Caco-2 (cell line): ENCODE measurements at regions of chr21 and their contacts with region 1.

Region 1: GRCh38 chr21:33924079-33924765 is 8.6 kb upstream of the ATP5PO start:
- DNase-seq: peak; percentile 87 to 89
- H3K4me3 ChIP-seq: no peak overlapping the region
- H3K4me3 Mint-ChIP-seq: no peak overlapping the region
- H3K27ac Mint-ChIP-seq: peak overlapping the region; percentile 2
- H3K4me1 ChIP-seq: peaks cover 22% of the 10 kb centered on the region
- H3K4me1 Mint-ChIP-seq: peaks cover 8% of the 10 kb centered on the region
- H3K27me3 ChIP-seq: no peaks in the 10 kb centered on the region
- H3K27me3 Mint-ChIP-seq: no peaks in the 10 kb centered on the region
- CTCF ChIP-seq: peak; percentile 79 to 81

Region 2: DNA sequence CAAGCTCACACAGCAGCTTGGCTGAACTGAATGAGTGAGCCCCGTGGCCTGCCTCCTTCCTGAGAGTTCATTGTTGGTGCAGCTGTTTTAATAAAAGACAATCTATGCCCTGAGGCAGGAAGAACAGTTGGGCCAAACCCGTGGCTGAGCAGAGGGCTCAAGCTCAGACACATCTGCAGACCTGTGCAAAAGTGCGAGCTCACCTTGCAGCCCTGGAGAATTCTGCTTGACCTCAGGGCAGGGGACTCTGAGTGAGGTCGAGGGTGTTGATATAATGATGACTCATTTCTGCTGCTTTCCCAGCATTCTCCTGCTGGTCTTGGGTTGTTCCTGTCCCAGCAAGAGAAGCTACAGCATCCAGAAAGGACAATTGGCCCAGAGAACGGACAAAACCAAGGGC is 69.6 kb before region 1 on chr21:
- CTCF ChIA-PET with region 1: no interaction called
- POLR2A ChIA-PET with region 1: no interaction called
- intact Hi-C with region 1: no loop called
- DNase-seq: no peak
- H3K4me3 ChIP-seq: no peak overlapping the region
- H3K4me3 Mint-ChIP-seq: no peak overlapping the region
- H3K27ac Mint-ChIP-seq: no peak overlapping the region
- H3K4me1 ChIP-seq: 0 out of 2 replicates have a peak, but pooled peaks cover 9% of the 10 kb centered on the region
- H3K4me1 Mint-ChIP-seq: no peaks in the 10 kb centered on the region
- H3K27me3 ChIP-seq: no peaks in the 10 kb centered on the region
- H3K27me3 Mint-ChIP-seq: no peaks in the 10 kb centered on the region
- CTCF ChIP-seq: no peak

Region 3: DNA sequence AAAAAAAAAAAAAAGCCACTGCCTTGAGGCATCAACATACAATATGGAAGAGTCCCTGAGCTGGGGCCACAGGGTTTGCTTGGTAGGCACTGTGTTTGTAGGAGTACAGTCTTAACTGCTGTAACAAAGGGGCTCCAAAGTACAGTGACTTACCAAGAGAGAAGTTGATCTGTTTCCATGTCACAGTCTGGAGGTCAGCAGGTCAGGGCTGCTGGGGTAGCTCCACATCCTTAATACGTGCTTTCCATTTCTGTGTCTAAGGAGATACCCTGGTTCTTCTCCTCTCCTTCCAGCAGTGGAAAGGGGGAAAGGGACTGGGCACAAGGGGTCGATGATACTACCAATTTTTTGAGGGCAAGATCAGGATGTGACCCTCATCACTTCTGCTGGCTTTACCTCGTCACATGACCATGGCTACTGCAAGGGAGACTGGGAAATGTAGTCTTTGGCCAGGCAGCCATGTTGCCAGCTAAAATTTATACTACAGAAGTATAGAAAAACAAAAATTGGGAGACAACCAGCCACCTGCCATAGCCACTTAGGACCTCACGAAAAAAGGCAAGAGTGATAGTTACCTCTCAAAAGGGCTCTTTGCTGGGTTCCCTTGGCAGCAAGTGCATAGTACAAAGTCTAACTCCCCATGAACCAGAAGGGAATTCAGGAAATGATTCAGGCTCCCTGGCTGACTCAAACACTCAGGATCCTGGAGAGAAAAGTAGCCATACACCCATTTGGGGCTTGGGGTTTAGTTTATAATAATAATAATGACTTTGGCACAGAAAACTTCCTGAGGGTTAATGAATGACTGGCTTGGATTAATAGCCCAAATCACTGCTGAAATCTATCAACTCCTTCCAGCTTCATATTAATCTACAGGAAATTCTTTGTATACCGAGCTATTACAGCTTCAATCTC is 44.1 kb after region 1 on chr21:
- CTCF ChIA-PET with region 1: interaction called, 14 read pairs
- POLR2A ChIA-PET with region 1: no interaction called
- intact Hi-C with region 1: loop called (anchors 2 kb)
- DNase-seq: peak; percentile 46 to 60
- H3K4me3 ChIP-seq: no peak overlapping the region
- H3K4me3 Mint-ChIP-seq: peak overlapping the region; percentile 45
- H3K27ac Mint-ChIP-seq: peak overlapping the region; percentile 89
- H3K4me1 ChIP-seq: peaks cover 65% of the 10 kb centered on the region
- H3K4me1 Mint-ChIP-seq: peaks cover 53% of the 10 kb centered on the region
- H3K27me3 ChIP-seq: no peaks in the 10 kb centered on the region
- H3K27me3 Mint-ChIP-seq: no peaks in the 10 kb centered on the region
- CTCF ChIP-seq: no peak

Region 4: GRCh38 chr21:34073032-34073869 is 149.0 kb after region 1 on chr21 and contains the starts of genes MRPS6 and SLC5A3:
- CTCF ChIA-PET with region 1: interaction called, 6 read pairs
- POLR2A ChIA-PET with region 1: interaction called, 4 read pairs
- intact Hi-C with region 1: loop called (anchors 2 kb)
- DNase-seq: peak; percentile 91 to 92
- H3K4me3 ChIP-seq: peak within 1 kb of the TSS; percentile 86
- H3K4me3 Mint-ChIP-seq: peak within 1 kb of the TSS; percentile 87
- H3K27ac Mint-ChIP-seq: peak within 1 kb of the TSS; percentile 95
- H3K4me1 ChIP-seq: peaks cover 35% of the 10 kb centered on the region
- H3K4me1 Mint-ChIP-seq: peaks cover 32% of the 10 kb centered on the region
- H3K27me3 ChIP-seq: no peaks in the 10 kb centered on the region
- H3K27me3 Mint-ChIP-seq: no peaks in the 10 kb centered on the region
- CTCF ChIP-seq: peak in 1 of 2 experiments; percentile 17
- total RNA-seq, gene MRPS6: 102 and 104 TPM in 2 replicates
- total RNA-seq, gene SLC5A3: 19.1 and 19.8 TPM in 2 replicates

Region 5: DNA sequence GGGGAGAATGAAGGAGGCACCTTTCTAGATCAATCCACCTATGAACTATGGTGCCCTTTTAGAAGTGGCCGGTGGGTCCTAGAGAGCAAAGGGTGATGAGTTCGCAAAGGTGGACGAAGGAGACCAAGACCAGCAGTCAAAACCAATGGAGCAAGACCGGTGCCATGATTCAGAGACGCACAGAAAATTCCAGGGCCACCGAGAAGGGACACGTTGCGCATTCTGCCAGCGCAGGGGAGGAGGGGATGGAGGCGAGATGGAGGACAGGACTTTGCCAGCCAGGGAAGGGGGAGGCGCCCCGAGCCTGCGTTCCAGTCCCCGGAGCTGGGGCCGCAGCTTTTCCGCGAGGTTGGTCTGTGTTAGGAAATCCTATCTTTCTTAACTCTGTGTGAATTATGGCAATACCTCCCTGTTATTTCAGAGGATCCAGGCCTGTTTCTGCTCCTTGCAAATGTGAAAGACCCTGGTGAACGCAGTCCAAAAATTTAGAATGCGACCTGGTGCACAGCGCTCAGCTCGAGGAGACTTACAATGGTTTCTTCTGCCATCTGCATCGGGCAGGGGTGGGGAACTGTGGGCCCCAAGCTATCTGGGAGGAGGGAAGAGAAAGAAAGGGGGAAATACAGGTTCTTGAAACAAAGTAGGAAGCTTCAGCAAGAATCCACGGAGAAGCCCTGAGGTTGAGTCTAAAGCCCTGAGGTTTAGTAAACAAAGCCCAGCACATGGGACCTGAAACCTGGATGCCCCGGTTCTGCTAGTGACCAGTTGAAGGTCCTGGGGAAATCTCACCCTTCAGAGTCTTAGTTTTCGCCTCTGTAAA is 278.5 kb after region 1 on chr21:
- CTCF ChIA-PET with region 1: interaction called, 9 read pairs
- POLR2A ChIA-PET with region 1: interaction called, 3 read pairs
- intact Hi-C with region 1: loop called (anchors 2 kb)
- DNase-seq: peak; percentile 38 to 48
- H3K4me3 ChIP-seq: peak overlapping the region; percentile 57
- H3K4me3 Mint-ChIP-seq: peak overlapping the region; percentile 85
- H3K27ac Mint-ChIP-seq: peak overlapping the region; percentile 87
- H3K4me1 ChIP-seq: peaks cover 16% of the 10 kb centered on the region
- H3K4me1 Mint-ChIP-seq: peaks cover 17% of the 10 kb centered on the region
- H3K27me3 ChIP-seq: no peaks in the 10 kb centered on the region
- H3K27me3 Mint-ChIP-seq: no peaks in the 10 kb centered on the region
- CTCF ChIP-seq: no peak

Region 6: GRCh38 chr21:34243562-34243961 is 319.3 kb after region 1 on chr21:
- CTCF ChIA-PET with region 1: interaction called, 3 read pairs
- POLR2A ChIA-PET with region 1: no interaction called
- intact Hi-C with region 1: loop called (anchors 2 kb)
- DNase-seq: peak in 1 of 2 experiments; percentile 15
- H3K4me3 ChIP-seq: no peak overlapping the region
- H3K4me3 Mint-ChIP-seq: no peak overlapping the region
- H3K27ac Mint-ChIP-seq: no peak overlapping the region
- H3K4me1 ChIP-seq: no peaks in the 10 kb centered on the region
- H3K4me1 Mint-ChIP-seq: no peaks in the 10 kb centered on the region
- H3K27me3 ChIP-seq: no peaks in the 10 kb centered on the region
- H3K27me3 Mint-ChIP-seq: no peaks in the 10 kb centered on the region
- CTCF ChIP-seq: peak; percentile 33 to 44

Region 7: GRCh38 chr21:34351786-34352241 is 427.6 kb after region 1 on chr21:
- CTCF ChIA-PET with region 1: interaction called, 31 read pairs
- POLR2A ChIA-PET with region 1: no interaction called
- intact Hi-C with region 1: no loop called
- DNase-seq: peak; percentile 71 to 74
- H3K4me3 ChIP-seq: no peak overlapping the region
- H3K4me3 Mint-ChIP-seq: no peak overlapping the region
- H3K27ac Mint-ChIP-seq: no peak overlapping the region
- H3K4me1 ChIP-seq: no peaks in the 10 kb centered on the region
- H3K4me1 Mint-ChIP-seq: no peaks in the 10 kb centered on the region
- H3K27me3 ChIP-seq: no peaks in the 10 kb centered on the region; the same call in 1 of the 2 replicates
- H3K27me3 Mint-ChIP-seq: peaks cover 3% of the 10 kb centered on the region
- CTCF ChIP-seq: peak; percentile 75 to 79